H1 (cell line): ENCODE measurements at regions of chr5 and their contacts with region 1.

Region 1: GRCh38 chr5:86679529-86679928 is 61.8 kb downstream of the COX7C start:
- DNase-seq: no peak
- H3K4me3 ChIP-seq: no peak overlapping the region
- H3K27ac ChIP-seq: no peak overlapping the region
- H3K4me1 ChIP-seq: peaks cover 0 to 3% (median 0%) of the 10 kb centered on the region in 4 experiments; a peak in 1 of 7 replicates
- H3K27me3 ChIP-seq: peaks cover 0 to 2% (median 0%) of the 10 kb centered on the region in 4 experiments; a peak in 1 of 7 replicates
- CTCF ChIP-seq: peak in 2 of 3 experiments; percentile 60 to 62; a peak in 3 of 4 replicates
- EP300 ChIP-seq: no peak
- POLR2A ChIP-seq: no peak
- RAD21 ChIP-seq: peak; percentile 91 to 93

Region 2: GRCh38 chr5:86461169-86461956 is 218.2 kb before region 1 on chr5:
- CTCF ChIA-PET with region 1: interaction called, 29 read pairs
- POLR2A ChIA-PET with region 1: no interaction called
- DNase-seq: no peak
- H3K4me3 ChIP-seq: no peak overlapping the region
- H3K27ac ChIP-seq: no peak overlapping the region
- H3K4me1 ChIP-seq: peaks cover 0 to 5% (median 0%) of the 10 kb centered on the region in 4 experiments; a peak in 3 of 7 replicates
- H3K27me3 ChIP-seq: no peaks in the 10 kb centered on the region
- CTCF ChIP-seq: no peak
- EP300 ChIP-seq: no peak
- POLR2A ChIP-seq: no peak
- RAD21 ChIP-seq: no peak

Region 3: GRCh38 chr5:86665984-86666760 is 13.4 kb before region 1 on chr5:
- CTCF ChIA-PET with region 1: interaction called, 18 read pairs
- POLR2A ChIA-PET with region 1: interaction called, 3 read pairs
- DNase-seq: no peak
- H3K4me3 ChIP-seq: peak overlapping the region in 1 of 4 experiments; percentile 32; a peak in 1 of 8 replicates
- H3K27ac ChIP-seq: no peak overlapping the region
- H3K4me1 ChIP-seq: no peaks in the 10 kb centered on the region; a peak in 2 of 7 replicates
- H3K27me3 ChIP-seq: no peaks in the 10 kb centered on the region
- CTCF ChIP-seq: no peak
- EP300 ChIP-seq: no peak
- POLR2A ChIP-seq: no peak
- RAD21 ChIP-seq: no peak